Posterior cingulate gyrus (tissue), 11 donors: ENCODE measurements at regions of chr19 and their contacts with region 1.

Region 1: DNA sequence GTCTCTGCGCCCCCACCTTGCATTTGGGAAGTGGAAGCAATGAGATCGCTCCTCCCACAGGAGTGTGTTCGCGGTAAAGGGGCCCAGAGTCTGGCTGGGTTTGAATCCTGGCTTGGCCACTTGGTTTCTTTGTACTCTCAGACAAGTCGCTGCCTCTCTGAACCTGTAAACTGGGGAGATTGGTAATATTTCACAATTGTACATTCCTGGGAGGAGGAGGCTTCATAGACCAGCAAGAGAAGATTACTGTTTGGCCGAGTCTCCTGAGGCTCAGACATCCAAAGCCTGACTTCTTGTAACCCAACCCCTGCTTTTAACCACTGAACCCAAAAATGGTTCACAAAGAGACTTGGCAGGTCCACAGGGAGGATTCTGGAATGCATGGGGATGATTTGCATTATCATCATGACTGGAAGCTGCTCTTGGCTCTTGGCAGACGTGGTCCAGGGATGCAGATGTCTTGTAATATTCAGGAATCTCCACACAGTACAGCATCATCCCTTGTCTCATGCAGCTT is 13.6 kb upstream of the STRN4 start:
- DNase-seq: no peak

Region 2: DNA sequence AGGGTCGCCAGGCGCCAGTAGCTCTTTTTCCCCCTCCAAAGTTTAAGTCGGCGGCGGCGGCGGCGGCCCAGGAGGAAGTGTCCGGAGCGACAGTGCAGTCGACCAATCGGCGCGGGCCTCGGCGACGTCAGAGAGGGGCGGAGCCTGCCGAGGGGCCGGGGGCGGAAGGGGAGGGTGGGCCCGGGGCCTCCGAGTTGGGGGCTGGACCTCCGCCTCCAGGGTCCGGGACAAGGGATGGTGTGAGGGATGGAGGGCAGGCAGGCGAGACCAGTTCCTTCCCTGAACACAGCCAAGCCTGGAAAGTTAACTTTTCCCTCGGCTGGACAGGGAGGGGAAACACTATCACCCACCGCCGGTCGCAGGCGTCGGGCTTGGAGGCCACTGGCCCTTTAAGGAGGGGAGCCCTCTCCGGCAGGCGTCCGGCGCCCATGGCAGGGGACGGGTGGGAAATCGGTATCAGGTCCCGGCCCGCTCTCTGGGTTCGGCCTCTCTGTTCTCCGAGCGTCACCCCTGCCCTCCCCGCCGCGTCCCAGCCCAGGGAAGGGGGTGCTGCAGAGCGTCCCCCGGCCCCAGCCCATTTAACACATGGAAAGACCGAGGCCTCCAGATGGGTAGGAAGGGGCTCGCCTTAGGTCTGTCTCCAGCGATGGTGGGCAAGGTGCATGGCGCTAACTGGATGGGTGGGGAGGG is 42.7 kb before region 1 on chr19 and contains the start of gene PRKD2:
- intact Hi-C with region 1: no loop called
- DNase-seq: peak; percentile 66 to 97 (median 85)

Region 3: DNA sequence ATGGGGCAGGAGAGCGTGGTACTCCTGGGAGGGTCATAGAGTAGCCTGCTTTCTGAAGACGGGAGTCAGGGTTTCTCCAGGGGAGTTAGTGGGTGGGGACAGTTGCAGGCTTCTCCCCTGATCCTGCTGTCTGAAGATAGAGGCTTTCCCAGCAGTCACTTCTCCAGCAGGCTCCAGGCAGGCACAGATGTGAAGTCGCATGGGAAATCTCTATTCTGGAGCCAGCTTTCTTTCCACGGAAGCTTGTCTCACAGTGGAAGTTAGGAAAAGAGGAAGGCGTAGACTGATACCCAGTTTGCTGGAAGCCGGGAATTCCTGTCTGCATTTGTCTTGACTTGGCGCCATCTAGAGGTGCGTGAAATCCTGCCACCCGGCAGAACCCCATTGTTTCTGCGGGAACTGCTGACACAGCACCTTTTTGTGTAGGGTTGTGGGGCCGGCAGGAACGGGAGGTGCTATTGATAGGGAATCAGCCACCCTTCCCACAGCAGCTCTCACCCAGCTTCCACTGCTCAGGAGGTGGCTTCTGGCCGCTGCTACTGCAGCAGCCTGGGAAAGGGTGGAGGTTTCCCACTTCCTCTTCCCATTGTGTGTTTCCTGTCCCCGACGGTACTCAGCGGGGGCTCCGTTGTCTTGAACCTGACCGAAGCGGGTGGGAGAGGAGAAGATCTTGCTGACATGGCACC is 231.3 kb after region 1 on chr19:
- intact Hi-C with region 1: loop called (anchors 5 kb)
- DNase-seq: peak; percentile 72 to 98 (median 88)